Astrocyte of the cerebellum (primary cell): ENCODE measurements at regions of chr10 and their contacts with region 1.

Region 1: GRCh38 chr10:103740611-103741010 is 114.8 kb downstream of the SH3PXD2A start:
- DNase-seq: no peak
- H3K4me3 ChIP-seq: no peak overlapping the region
- CTCF ChIP-seq: no peak

Region 2: GRCh38 chr10:103789771-103790201 is 49.2 kb after region 1 on chr10:
- in situ Hi-C with region 1: loop called (anchors 5 kb)
- DNase-seq: no peak
- H3K4me3 ChIP-seq: no peak overlapping the region
- CTCF ChIP-seq: no peak

Region 3: GRCh38 chr10:103839872-103840746 is 99.5 kb after region 1 on chr10:
- in situ Hi-C with region 1: loop called (anchors 5 kb)
- DNase-seq: no peak
- H3K4me3 ChIP-seq: no peak overlapping the region
- CTCF ChIP-seq: no peak